ENCODE measurements at regions of chr20 and their contacts with region 1.

Region 1: DNA sequence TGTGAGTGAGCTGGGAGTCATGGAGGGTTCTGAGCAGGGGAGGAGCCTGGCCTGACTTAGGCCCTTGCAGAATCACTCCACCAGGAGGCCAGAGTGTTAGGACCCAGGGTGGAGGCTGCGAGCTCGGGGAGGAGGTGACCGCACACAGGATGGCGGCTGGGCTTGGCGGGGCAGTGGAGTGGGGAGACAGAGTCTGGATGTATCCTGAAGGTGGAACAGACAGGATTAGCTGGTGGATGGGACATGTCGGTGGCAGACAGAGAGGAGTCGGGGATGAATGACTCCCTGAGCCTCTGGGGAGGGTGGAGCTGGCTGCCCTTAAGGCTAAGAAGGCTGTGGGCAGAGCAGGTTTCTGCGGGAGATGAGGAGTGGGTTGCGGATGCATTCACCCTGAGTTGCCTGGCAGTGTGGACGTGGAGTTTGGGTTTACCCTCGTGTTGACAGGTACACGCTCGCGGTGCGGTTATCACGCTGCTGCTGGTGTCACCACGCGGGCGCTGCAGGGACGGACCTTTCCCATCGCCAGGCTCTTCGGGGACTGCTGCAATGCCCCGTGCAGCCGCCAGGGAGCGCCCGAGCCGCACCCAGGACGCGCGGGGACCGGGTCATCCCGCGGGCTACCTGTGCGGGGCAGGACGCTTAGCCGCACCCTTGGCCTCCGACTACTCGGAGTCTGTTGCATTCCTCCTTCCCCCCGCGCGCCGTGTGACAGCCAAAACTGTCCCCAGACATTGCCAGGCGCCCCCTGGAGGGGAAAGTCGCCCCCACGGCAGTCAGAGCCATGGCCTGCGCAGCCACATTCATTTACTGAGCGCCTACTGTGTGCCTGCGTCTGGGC is 43.0 kb upstream of the PTGIS start:
- DNase-seq: peak; percentile 81
- H3K4me3 ChIP-seq: peak overlapping the region; percentile 58
- H3K27ac ChIP-seq: no peak overlapping the region
- H3K4me1 ChIP-seq: no peaks in the 10 kb centered on the region
- H3K27me3 ChIP-seq: no peaks in the 10 kb centered on the region

Region 2: GRCh38 chr20:49330544-49331239 is 280.2 kb before region 1 on chr20:
- in situ Hi-C with region 1: loop called (anchors 5 kb)
- DNase-seq: no peak
- H3K4me3 ChIP-seq: no peak overlapping the region
- H3K27ac ChIP-seq: no peak overlapping the region
- H3K4me1 ChIP-seq: peaks cover 13% of the 10 kb centered on the region
- H3K27me3 ChIP-seq: peaks cover 39% of the 10 kb centered on the region

Region 3: DNA sequence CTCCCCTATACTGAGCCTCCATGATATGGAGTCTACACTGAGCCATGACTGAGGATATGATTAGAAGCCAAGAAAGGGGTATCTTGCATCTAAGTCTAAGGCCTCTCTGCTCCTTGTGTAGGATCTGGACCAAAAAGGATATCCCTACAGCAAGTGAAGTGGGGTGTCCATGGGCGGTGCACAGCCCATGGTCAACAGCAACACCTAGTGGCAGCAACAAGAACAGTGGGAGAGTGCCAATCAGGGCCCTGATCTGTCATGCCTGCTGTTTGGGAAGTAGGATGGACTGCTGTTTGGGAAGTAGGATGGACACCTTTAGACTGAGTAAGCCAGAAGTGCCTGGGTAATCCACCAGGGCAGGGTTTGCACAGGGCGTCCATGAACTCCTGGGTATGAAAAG is 65.3 kb before region 1 on chr20:
- in situ Hi-C with region 1: loop called (anchors 5 kb)
- DNase-seq: peak; percentile 14
- H3K4me3 ChIP-seq: no peak overlapping the region
- H3K27ac ChIP-seq: no peak overlapping the region
- H3K4me1 ChIP-seq: no peaks in the 10 kb centered on the region
- H3K27me3 ChIP-seq: no peaks in the 10 kb centered on the region

Region 4: DNA sequence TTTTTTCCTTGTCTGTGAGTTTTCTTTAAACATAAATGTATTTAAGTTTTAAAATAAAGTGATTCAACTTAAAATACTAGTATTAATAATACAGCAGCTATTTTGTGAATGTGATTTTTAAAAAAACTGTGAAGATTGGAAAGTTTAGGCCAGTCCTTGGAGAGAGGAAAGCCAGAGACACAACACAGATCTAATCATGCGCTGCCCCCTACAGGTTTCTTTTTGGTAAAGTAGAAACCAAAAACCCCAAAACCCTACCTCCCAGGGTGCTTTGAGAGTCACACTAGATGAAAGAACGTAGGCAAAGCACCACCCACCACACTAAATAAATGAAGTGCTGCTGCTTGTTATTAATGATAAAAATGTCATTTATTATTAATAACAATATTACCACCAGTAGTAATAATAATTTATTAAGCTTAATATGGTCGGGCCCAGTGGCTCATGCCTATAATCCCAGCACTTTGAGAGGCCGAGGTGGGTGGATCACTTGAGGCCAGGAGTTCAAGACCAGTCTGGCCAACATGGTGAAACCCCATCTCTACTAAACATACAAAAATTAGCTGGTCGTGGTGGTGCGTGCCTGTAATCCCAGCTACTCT is 235.4 kb after region 1 on chr20:
- in situ Hi-C with region 1: loop called (anchors 10 kb)
- DNase-seq: peak; percentile 80
- H3K4me3 ChIP-seq: no peak overlapping the region
- H3K27ac ChIP-seq: no peak overlapping the region
- H3K4me1 ChIP-seq: no peaks in the 10 kb centered on the region
- H3K27me3 ChIP-seq: no peaks in the 10 kb centered on the region

Measured in GM23248 (cell line).